IMR-90 (cell line): ENCODE measurements at regions of chr3 and their contacts with region 1.

Region 1: GRCh38 chr3:151918253-151919029 is 45.0 kb downstream of the SUCNR1 start:
- DNase-seq: peak; percentile 75
- ATAC-seq: peak; percentile 87
- H3K4me3 ChIP-seq: no peak overlapping the region
- H3K27ac ChIP-seq: no peak overlapping the region
- H3K4me1 ChIP-seq: no peaks in the 10 kb centered on the region
- H3K27me3 ChIP-seq: no peaks in the 10 kb centered on the region
- CTCF ChIP-seq: peak; percentile 84
- POLR2A ChIP-seq: no peak
- RAD21 ChIP-seq: peak; percentile 89

Region 2: DNA sequence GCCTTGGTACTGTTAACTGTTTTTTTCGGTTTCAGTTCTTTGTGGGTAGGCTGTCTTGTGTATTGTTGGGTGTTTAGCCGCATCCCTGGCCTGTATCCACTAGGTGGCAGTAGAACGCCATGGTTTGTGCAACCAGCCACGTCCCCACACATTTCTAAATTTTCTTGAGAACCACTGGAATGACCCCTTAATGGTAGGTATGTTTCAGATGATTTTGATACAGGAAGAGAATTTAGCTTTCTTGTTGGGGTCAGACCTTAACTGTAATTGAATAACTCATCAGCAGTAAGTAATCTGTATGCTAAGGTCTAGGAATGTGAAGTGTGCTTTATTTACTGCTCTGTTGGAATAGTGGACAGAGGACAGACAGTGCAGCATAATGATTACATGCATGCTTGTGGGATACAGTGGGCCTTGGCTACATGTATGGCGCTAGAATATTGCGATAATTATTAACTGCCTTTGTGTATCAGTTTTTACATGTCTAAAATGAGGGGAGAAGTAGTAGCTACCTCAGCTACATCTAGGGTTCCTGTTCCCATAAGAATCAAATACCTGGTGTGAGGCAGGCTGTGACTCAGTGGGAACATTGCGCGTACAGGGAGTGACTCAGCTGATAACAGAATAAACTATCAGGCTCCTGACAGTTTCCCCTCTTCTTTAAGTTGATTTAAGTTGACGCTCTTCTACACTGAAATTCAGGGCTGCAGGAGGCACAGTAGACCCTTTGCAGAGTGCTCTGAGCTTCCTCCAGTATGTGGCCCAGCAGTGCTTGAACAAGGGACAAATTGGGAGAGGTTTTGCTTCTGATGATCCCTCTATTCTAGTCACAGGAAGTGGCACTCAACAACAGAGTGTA is 690.4 kb before region 1 on chr3:
- CTCF ChIA-PET with region 1: no interaction called
- POLR2A ChIA-PET with region 1: no interaction called
- dilution Hi-C with region 1: no loop called
- in situ Hi-C with region 1: no loop called
- intact Hi-C with region 1: loop called (anchors 5 kb)
- DNase-seq: peak; percentile 95
- ATAC-seq: peak; percentile 79
- H3K4me3 ChIP-seq: no peak overlapping the region
- H3K27ac ChIP-seq: peak overlapping the region; percentile 66
- H3K4me1 ChIP-seq: peaks cover 21% of the 10 kb centered on the region
- H3K27me3 ChIP-seq: no peaks in the 10 kb centered on the region
- CTCF ChIP-seq: peak; percentile 96
- POLR2A ChIP-seq: peak; percentile 67
- RAD21 ChIP-seq: peak; percentile 98

Region 3: DNA sequence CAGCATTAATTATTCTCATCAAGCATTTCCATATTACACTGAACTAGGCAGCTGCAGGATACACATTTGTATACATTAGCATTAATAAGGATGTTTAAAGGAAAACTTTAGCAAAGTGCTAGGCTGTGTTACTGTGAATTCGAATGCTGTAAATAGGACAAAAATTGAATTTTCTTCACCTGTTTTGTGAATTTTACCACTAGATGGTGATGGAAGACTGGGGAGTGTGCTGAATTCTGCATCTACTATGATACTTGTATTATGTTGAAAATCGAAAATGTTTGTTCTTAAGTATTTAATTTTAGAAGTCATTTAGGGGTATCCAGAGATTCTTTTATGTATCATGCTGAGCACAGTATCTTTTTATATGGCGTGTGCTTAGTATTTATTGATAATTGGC is 627.8 kb before region 1 on chr3:
- CTCF ChIA-PET with region 1: interaction called, 7 read pairs
- POLR2A ChIA-PET with region 1: no interaction called
- dilution Hi-C with region 1: no loop called
- in situ Hi-C with region 1: loop called (anchors 5 kb)
- intact Hi-C with region 1: loop called (anchors 1 kb)
- DNase-seq: peak; percentile 66
- ATAC-seq: peak; percentile 72
- H3K4me3 ChIP-seq: no peak overlapping the region
- H3K27ac ChIP-seq: no peak overlapping the region
- H3K4me1 ChIP-seq: no peaks in the 10 kb centered on the region
- H3K27me3 ChIP-seq: no peaks in the 10 kb centered on the region
- CTCF ChIP-seq: peak; percentile 87
- POLR2A ChIP-seq: no peak
- RAD21 ChIP-seq: peak; percentile 93

Region 4: DNA sequence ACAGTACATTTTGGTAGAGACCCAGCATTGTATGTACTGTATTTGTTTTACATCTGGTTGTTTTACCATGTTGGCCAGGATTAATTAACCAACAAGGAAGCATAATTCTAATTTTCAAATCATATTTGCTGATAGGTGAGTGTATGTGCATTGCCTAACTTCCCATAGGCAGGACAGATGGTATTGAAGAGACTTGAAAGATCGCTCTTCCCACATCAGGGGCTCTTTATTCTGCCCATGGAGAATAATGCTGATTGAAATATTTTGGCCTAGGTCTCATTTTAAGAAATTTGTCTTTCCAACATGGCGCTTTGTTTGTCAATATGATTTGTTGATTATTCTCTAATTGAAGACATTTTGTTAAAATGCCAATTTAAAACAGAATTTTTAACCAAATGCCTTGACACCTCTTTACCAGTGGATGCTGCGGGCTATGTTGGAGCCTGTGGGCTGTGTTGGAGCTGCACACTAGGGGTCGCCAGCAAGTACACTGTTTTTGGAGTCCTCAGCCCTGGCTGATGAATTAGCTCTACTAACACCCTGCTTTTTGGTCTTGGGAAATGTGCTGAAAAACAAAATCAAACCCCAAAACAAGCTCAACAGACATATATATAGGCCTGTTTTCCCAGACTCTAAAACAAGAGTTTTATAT is 539.2 kb before region 1 on chr3:
- CTCF ChIA-PET with region 1: no interaction called
- POLR2A ChIA-PET with region 1: no interaction called
- dilution Hi-C with region 1: no loop called
- in situ Hi-C with region 1: no loop called
- intact Hi-C with region 1: loop called (anchors 5 kb)
- DNase-seq: no peak
- ATAC-seq: peak; percentile 64
- H3K4me3 ChIP-seq: no peak overlapping the region
- H3K27ac ChIP-seq: no peak overlapping the region
- H3K4me1 ChIP-seq: no peaks in the 10 kb centered on the region
- H3K27me3 ChIP-seq: no peaks in the 10 kb centered on the region
- CTCF ChIP-seq: peak; percentile 50
- POLR2A ChIP-seq: no peak
- RAD21 ChIP-seq: peak; percentile 34

Region 5: DNA sequence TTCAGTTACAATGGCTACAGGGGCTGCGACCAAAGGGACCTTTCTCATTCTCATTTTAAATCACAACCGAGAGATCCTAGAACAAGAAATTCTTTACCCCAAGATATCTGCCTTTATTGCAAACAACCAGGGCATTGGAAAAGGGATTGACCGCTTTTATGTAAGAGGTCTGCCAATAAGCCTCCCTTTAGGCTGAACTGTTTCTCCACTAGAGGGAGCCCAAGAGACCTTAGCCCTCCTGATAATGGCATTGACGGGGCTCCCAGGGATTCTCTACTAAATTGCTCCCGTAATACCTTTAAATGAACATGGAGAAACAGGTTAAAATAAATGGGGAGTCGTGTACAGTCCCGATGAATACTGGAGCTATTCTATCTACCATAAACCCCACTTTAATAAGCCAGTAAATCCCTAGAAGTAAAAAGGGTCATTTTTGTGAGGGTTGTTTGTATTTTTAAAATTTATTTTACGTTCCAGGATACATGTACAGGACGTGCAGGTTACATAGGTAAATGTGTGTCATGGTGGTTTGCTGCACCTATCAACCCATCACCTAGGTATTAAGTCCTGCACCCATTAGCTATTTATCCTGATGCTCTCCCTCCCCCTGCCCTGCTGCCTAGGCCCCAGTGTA is 450.0 kb before region 1 on chr3:
- CTCF ChIA-PET with region 1: interaction called, 5 read pairs
- POLR2A ChIA-PET with region 1: no interaction called
- dilution Hi-C with region 1: no loop called
- in situ Hi-C with region 1: no loop called
- intact Hi-C with region 1: loop called (anchors 2 kb)
- DNase-seq: peak; percentile 62
- ATAC-seq: peak; percentile 83
- H3K4me3 ChIP-seq: no peak overlapping the region
- H3K27ac ChIP-seq: no peak overlapping the region
- H3K4me1 ChIP-seq: no peaks in the 10 kb centered on the region
- H3K27me3 ChIP-seq: no peaks in the 10 kb centered on the region; the same call in 1 of the 2 replicates
- CTCF ChIP-seq: peak; percentile 76
- POLR2A ChIP-seq: no peak
- RAD21 ChIP-seq: peak; percentile 68

Region 6: GRCh38 chr3:151660885-151661284 is 257.6 kb before region 1 on chr3:
- CTCF ChIA-PET with region 1: no interaction called
- POLR2A ChIA-PET with region 1: no interaction called
- dilution Hi-C with region 1: no loop called
- in situ Hi-C with region 1: no loop called
- intact Hi-C with region 1: loop called (anchors 1 kb)
- DNase-seq: no peak
- ATAC-seq: no peak
- H3K4me3 ChIP-seq: no peak overlapping the region
- H3K27ac ChIP-seq: no peak overlapping the region
- H3K4me1 ChIP-seq: no peaks in the 10 kb centered on the region
- H3K27me3 ChIP-seq: no peaks in the 10 kb centered on the region; the same call in 1 of the 2 replicates
- CTCF ChIP-seq: 0 out of 2 replicates have a peak, but pooled peaks have one; percentile 22
- POLR2A ChIP-seq: no peak
- RAD21 ChIP-seq: no peak

Region 7: DNA sequence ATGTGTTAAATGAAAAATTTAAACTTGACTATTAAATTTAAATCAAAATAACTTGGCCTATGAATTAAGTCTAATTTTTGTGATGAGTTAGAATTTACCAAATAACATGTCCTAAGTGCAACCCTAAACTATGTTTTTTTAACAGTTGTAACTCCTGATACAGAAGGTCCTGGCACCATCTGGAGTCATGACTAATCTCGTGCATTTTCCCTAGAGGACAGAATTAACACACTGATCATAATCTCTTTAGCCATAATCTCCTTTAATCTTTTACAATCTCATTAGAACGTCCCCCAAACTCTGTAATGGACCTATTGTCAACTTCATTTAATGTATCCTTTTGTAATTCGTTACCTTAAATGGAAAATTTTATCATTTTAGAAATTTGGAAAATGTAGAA is 55.6 kb after region 1 on chr3:
- CTCF ChIA-PET with region 1: no interaction called
- POLR2A ChIA-PET with region 1: no interaction called
- dilution Hi-C with region 1: no loop called
- in situ Hi-C with region 1: no loop called
- intact Hi-C with region 1: no loop called
- DNase-seq: peak; percentile 36
- ATAC-seq: no peak
- H3K4me3 ChIP-seq: no peak overlapping the region
- H3K27ac ChIP-seq: no peak overlapping the region
- H3K4me1 ChIP-seq: peaks cover 2% of the 10 kb centered on the region; the same call in 1 of the 2 replicates
- H3K27me3 ChIP-seq: no peaks in the 10 kb centered on the region
- CTCF ChIP-seq: no peak
- POLR2A ChIP-seq: no peak
- RAD21 ChIP-seq: no peak

Region 8: DNA sequence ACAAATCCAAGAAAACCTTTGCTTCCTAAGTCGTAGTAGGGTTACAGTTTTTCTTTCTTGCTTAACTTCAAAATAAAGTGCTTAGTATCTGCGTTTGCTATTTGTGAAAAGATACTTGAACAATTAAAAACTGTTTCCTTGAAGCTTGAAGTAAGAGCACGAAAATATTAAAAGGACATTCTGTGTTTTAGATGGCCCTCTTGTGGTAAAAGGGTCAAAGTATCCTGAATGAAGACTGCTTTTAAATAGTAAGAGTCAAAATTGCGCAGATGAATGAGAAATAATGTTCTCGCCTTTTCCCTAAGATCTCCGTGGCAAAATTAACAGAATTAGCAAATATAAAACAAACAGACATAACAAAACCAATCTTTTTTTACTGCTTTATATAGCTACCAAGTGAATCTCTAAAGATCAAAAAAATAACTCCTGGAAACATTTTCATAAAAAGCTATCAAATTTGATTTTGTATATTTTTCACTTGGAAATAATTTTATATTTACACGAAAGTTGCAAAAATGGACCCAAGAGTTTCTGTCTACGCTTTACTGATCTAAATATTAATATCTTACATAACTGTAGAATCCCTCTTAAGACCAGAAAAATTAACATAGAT is 525.7 kb after region 1 on chr3:
- CTCF ChIA-PET with region 1: no interaction called
- POLR2A ChIA-PET with region 1: no interaction called
- dilution Hi-C with region 1: no loop called
- in situ Hi-C with region 1: no loop called
- intact Hi-C with region 1: loop called (anchors 5 kb)
- DNase-seq: peak; percentile 73
- ATAC-seq: peak; percentile 50; the same call in 1 of the 2 replicates
- H3K4me3 ChIP-seq: no peak overlapping the region
- H3K27ac ChIP-seq: no peak overlapping the region
- H3K4me1 ChIP-seq: peaks cover 4% of the 10 kb centered on the region
- H3K27me3 ChIP-seq: no peaks in the 10 kb centered on the region
- CTCF ChIP-seq: peak; percentile 64
- POLR2A ChIP-seq: no peak
- RAD21 ChIP-seq: peak; percentile 70

Region 9: DNA sequence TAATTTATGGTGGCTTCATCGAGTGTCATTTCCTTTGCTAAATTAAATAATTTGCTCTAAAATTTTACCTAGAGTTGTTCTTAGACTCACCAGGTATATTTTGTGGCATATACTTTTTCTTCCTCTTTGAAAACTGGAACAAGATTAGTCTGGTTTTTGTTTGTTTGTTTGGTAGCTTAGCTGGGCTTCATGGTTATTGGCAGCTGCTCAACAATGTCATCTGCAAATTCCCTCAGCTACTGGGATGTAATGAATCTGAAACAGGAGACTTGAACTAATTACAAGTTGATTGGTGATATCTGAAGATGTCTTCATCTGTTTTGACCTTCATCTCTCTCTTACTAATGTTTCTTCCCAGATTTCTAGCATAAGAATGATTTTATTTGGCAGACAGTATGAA is 646.0 kb after region 1 on chr3:
- CTCF ChIA-PET with region 1: no interaction called
- POLR2A ChIA-PET with region 1: no interaction called
- dilution Hi-C with region 1: no loop called
- in situ Hi-C with region 1: no loop called
- intact Hi-C with region 1: no loop called
- DNase-seq: no peak
- ATAC-seq: no peak
- H3K4me3 ChIP-seq: no peak overlapping the region
- H3K27ac ChIP-seq: no peak overlapping the region
- H3K4me1 ChIP-seq: no peaks in the 10 kb centered on the region
- H3K27me3 ChIP-seq: peaks cover 2% of the 10 kb centered on the region; the same call in 1 of the 2 replicates
- CTCF ChIP-seq: no peak
- POLR2A ChIP-seq: no peak
- RAD21 ChIP-seq: no peak